GM12878 (cell line): ENCODE measurements at regions of chr4 and their contacts with region 1.

Region 1: GRCh38 chr4:17583941-17584340 is 6.9 kb downstream of the LAP3 start:
- DNase-seq: no peak
- ATAC-seq: no peak
- H3K4me3 ChIP-seq: no peak overlapping the region
- H3K27ac ChIP-seq: no peak overlapping the region
- H3K4me1 ChIP-seq: no peaks in the 10 kb centered on the region
- H3K27me3 ChIP-seq: no peaks in the 10 kb centered on the region
- CTCF ChIP-seq: no peak
- EP300 ChIP-seq: no peak
- POLR2A ChIP-seq: 0 out of 2 replicates have a peak, but pooled peaks have one; percentile 30
- RAD21 ChIP-seq: no peak

Region 2: DNA sequence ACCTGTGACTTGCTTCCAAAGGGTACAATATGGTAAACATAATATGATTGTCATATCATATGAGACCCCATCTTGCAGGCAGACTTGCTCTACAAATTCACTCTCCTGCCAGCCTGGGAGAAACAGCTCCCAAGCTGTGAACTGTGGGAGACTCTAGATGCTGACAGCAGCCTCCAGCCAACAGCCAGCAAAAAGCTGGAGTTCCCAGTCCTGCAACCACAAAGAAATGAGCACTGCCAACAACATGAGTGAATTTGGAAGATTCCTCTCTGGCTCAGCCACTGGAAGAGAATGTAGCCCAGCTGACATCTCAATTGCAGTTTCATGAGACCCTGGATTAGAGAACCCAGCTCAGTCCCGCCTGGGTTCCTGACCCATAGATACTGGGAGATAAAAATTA is 217.4 kb before region 1 on chr4:
- CTCF ChIA-PET with region 1: no interaction called
- POLR2A ChIA-PET with region 1: no interaction called
- RAD21 ChIA-PET with region 1: no interaction called
- SMC1A ChIA-PET with region 1: no interaction called
- in situ Hi-C with region 1: no loop called
- intact Hi-C with region 1: no loop called
- DNase-seq: no peak
- ATAC-seq: no peak
- H3K4me3 ChIP-seq: no peak overlapping the region
- H3K27ac ChIP-seq: no peak overlapping the region
- H3K4me1 ChIP-seq: no peaks in the 10 kb centered on the region
- H3K27me3 ChIP-seq: no peaks in the 10 kb centered on the region
- CTCF ChIP-seq: no peak
- EP300 ChIP-seq: no peak
- POLR2A ChIP-seq: no peak
- RAD21 ChIP-seq: no peak

Region 3: GRCh38 chr4:17597517-17597916 is 13.6 kb after region 1 on chr4:
- CTCF ChIA-PET with region 1: no interaction called
- POLR2A ChIA-PET with region 1: no interaction called
- RAD21 ChIA-PET with region 1: interaction called, 4 read pairs
- SMC1A ChIA-PET with region 1: interaction called, 8 read pairs
- in situ Hi-C with region 1: no loop called
- intact Hi-C with region 1: loop called (anchors 1 kb)
- DNase-seq: no peak
- ATAC-seq: no peak
- H3K4me3 ChIP-seq: no peak overlapping the region
- H3K27ac ChIP-seq: no peak overlapping the region
- H3K4me1 ChIP-seq: peaks cover 23% of the 10 kb centered on the region
- H3K27me3 ChIP-seq: no peaks in the 10 kb centered on the region
- CTCF ChIP-seq: peak in 2 of 3 experiments; percentile 7 to 24; a peak in 1 of 6 replicates
- EP300 ChIP-seq: no peak
- POLR2A ChIP-seq: no peak
- RAD21 ChIP-seq: 0 out of 2 replicates have a peak, but pooled peaks have one; percentile 9